ENCODE measurements at regions of chr9 and their contacts with region 1.

Region 1: DNA sequence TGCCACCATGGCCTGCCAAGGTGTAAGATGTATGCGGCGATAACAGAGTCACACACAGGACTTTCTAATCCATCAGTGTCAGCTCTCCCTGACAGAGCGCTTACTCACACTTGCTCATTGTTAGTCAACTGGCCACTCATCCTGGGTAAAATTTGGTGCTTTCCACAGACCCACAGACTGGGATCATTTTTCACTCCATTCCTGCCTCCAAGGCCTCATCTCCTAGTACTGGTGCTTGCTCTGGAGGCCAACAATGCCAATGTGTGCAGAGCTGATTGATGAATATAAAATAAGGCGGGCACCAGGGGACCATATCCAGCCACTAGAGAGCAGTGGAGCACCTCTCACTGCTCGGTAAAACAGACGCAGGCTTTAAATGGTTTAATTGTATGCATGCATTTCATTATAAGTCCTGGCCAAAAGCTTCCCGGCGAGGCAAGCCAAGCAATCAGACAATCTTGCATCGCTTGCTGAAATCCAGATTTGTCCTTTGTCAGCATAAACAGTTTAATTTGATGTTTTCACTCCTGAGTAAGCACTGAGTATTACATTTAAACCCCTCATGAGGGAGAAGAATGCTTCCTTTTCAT is 22.3 kb downstream of the PSMB7 start:
- DNase-seq: peak; percentile 87 to 99
- H3K4me3 ChIP-seq: peak overlapping the region; percentile 51; the same call in 1 of the 2 replicates
- H3K27ac ChIP-seq: peak overlapping the region; percentile 97
- H3K4me1 ChIP-seq: peaks cover 82% of the 10 kb centered on the region
- H3K27me3 ChIP-seq: no peaks in the 10 kb centered on the region
- CTCF ChIP-seq: peak; percentile 60; the same call in 1 of the 2 replicates

Region 2: DNA sequence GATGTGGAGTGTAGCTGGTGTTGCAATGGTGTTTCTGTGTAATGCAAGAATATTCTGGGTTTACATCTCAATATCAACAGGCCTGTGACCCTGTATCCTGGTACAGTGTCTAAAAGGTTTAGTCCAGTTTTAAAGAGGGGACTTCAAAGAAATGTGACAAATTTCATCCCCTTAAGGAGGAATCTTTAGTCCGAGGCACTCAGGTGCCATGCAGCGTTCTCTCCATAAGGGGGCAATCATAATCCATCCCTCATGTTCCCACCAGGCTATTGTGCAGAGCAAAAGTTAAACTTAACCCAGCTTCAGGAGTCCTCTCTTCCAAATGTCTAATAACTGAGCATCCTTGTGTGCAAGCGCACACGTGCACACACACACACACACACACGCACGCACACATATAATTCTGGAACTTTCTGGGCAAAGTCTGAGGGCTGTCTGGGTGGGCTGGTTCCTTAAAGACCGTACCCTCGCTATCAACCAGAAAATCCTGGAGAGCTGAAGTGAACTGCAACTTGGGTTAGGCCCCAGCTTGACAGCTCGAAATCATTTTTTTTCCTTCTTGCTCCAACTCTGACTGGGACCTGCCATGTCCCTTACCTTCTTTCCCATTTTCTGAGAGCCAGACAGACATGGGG is 991.0 kb before region 1 on chr9:
- CTCF ChIA-PET with region 1: no interaction called
- POLR2A ChIA-PET with region 1: no interaction called
- intact Hi-C with region 1: loop called (anchors 2 kb)
- DNase-seq: peak in 1 of 2 experiments; percentile 45
- H3K4me3 ChIP-seq: no peak overlapping the region
- H3K27ac ChIP-seq: no peak overlapping the region
- H3K4me1 ChIP-seq: no peaks in the 10 kb centered on the region
- H3K27me3 ChIP-seq: no peaks in the 10 kb centered on the region
- CTCF ChIP-seq: peak; percentile 81

Region 3: DNA sequence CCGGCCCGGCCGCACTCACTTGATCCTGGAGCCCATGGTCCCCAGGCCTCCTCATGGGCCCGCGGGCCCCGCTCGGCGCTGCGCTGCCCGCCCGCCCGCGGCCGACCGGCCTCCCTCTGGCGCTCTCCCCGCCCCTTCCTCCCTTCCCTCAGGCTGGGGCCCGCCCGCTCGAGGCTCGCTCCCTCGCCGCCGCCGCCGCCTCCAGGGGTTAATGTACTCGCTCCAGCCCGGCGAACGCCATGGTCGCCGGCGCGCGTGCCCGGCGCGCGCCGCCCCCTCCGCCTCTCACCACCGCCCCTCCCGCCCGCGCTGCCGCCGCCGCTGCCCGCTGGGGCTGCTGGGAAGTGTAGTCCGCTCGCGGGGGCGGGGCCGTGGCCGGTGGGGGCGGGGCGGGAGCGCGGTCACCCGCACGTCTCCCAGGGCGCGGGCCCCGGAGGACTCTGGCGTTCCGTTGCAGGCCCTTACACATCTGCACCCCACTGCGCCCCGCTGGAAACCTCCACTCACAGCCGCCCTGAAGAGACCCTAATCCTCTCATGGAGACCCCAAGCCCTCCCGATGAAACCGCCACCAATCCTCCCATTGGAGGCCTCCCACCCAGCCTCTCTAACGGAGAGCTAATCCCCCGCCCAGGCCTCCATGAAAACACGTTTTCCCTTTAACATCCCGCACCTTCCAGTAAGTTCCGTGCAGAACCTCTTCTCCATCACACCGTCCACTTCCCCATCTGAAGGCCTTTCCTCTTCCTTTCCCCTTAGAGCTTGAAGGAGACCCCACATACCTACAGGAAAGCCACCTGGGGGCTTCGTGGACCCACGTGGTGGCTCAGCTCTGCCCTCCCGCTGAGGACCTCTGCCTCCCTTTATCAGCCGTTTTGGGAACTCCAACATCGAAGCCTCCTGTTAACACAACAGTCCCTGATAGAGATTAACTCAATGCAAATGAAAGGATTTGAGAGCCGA is 462.8 kb before region 1 on chr9 and contains the start of gene DENND1A:
- CTCF ChIA-PET with region 1: no interaction called
- POLR2A ChIA-PET with region 1: no interaction called
- intact Hi-C with region 1: loop called (anchors 5 kb)
- DNase-seq: peak; percentile 58 to 92
- H3K4me3 ChIP-seq: peak within 1 kb of the TSS; percentile 85
- H3K27ac ChIP-seq: peak within 1 kb of the TSS; percentile 75
- H3K4me1 ChIP-seq: peaks cover 64% of the 10 kb centered on the region
- H3K27me3 ChIP-seq: no peaks in the 10 kb centered on the region
- CTCF ChIP-seq: no peak
- total RNA-seq, gene DENND1A: 26.8 and 37.7 TPM in 2 replicates

Region 4: GRCh38 chr9:124079176-124079925 is 313.6 kb before region 1 on chr9:
- CTCF ChIA-PET with region 1: no interaction called
- POLR2A ChIA-PET with region 1: no interaction called
- intact Hi-C with region 1: loop called (anchors 2 kb)
- DNase-seq: peak; percentile 58 to 84
- H3K4me3 ChIP-seq: no peak overlapping the region
- H3K27ac ChIP-seq: peak overlapping the region; percentile 70
- H3K4me1 ChIP-seq: peaks cover 25% of the 10 kb centered on the region
- H3K27me3 ChIP-seq: peaks cover 9% of the 10 kb centered on the region; the same call in 1 of the 2 replicates
- CTCF ChIP-seq: no peak

Region 5: DNA sequence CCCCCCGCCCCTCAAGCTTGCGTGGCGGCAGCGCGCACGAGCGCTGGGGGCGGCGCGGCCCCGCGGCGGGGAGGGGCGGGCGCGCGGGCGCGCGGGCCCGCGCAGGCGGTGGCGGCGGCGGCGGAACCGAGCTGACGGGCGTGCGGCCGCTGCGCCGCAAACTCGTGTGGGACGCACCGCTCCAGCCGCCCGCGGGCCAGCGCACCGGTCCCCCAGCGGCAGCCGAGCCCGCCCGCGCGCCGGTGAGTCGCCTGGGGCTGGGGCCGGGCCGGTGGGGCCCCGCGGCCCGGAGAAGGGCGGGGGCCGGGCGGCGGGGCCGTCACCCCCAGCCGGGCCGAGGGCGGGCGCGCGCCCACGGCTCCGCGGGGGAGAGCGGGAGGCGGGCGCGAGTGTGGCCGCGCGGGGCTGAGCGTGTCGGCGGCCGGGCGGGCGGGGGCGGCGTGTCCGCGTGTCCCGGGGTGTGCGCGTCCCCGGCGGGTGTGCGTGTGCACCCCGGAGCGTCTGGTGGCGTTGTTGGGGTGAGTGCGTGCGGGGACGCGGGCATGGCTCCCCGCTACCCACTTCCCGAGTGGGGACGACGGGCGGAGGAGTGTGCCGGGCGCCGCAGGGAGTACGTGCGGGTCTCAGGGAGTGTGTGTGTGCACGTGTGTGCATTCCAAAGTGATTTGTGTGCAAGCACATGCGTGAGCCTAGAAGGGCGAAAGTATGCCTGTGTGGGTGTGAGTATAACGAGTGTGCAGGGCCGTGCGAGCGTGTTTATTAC is 134.9 kb before region 1 on chr9 and contains the start of gene NEK6:
- CTCF ChIA-PET with region 1: no interaction called
- POLR2A ChIA-PET with region 1: no interaction called
- intact Hi-C with region 1: loop called (anchors 1 kb)
- DNase-seq: no peak
- H3K4me3 ChIP-seq: peak within 1 kb of the TSS; percentile 72
- H3K27ac ChIP-seq: peak within 1 kb of the TSS; percentile 72
- H3K4me1 ChIP-seq: peaks cover 43% of the 10 kb centered on the region
- H3K27me3 ChIP-seq: no peaks in the 10 kb centered on the region
- CTCF ChIP-seq: no peak
- total RNA-seq, gene NEK6: 48.1 and 57.9 TPM in 2 replicates

Region 6: DNA sequence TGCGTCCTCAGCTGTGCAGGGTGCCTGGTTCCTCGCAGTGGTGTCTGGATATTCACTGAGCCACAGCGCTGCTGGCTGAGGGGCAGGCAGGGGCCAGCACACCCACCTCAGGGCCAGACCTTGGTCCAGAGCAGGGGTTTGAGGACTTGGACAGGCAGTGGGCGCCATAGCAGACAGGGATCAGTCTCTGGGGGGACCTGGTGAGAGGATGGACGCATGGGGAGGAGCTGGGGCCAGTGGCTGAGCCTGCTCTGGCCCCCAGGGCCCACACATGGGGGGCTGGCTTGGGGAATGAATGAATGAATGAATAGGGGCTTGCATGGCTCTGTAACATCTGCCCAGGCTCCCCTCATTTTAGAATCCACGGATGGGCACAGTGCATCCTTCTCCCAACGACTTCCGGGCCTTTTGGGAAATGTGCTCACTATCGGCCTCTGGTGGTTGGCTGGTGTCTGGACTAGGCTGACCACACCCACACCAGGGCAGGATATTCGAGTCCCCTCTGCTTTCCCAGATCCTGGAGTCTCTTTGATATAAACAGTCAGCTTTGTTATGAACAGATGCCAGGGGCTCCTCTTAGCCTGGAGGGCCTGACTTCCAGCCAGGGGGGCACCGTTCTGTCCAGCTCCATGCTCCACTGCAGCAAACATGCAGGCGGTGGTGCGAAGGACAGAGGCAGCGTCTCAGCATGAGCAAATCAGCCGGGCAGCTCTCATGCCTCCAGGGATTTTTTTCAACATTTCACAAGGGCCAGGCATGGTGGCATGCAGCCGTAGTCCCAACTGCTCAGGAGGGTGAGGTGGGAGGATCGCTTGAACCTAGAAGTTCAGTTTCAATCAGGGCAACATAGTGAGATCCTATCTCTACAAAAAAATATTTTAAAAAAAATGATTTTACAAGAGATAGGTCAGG is 72.6 kb before region 1 on chr9:
- CTCF ChIA-PET with region 1: no interaction called
- POLR2A ChIA-PET with region 1: no interaction called
- intact Hi-C with region 1: no loop called
- DNase-seq: peak; percentile 41 to 77
- H3K4me3 ChIP-seq: no peak overlapping the region
- H3K27ac ChIP-seq: no peak overlapping the region
- H3K4me1 ChIP-seq: no peaks in the 10 kb centered on the region
- H3K27me3 ChIP-seq: no peaks in the 10 kb centered on the region
- CTCF ChIP-seq: peak; percentile 89

Region 7: DNA sequence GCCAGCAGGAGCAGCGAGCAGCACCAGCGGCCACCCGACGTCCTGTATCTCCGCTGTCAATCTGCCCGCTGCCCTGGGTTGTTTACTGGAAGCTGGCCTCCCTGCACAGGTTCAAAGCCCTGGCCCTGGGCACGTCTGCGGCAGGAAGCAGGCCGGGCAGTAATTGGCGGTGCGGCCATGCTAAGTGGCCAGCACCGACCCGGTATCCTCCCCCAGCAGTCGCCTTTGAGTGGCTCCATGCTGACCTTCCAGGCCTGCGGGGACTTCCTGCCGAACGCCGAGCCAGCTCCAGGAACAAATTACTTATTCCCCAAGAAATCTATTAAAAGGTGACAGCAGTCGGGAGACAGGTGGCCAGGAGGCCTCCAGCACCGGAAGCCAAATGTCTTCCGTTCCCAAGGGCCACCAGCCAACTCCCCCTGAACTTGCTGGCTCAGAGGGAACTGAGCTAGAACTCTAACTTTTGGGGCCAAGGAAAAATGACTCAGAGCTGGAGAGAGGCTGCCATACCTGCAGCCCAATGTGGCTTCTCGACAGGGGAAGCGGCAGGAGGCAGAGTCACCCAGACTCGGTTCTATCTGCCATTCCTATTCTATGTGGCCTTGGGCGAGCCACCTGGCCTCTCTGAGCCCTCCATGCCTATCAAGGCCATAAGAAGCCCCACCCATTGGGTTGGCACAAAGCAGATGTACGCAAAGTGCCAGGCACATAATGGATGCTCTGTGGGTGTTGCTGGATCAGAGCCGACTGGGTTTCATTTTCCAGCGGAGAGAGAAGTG is 36.0 kb after region 1 on chr9:
- CTCF ChIA-PET with region 1: no interaction called
- POLR2A ChIA-PET with region 1: no interaction called
- intact Hi-C with region 1: no loop called
- DNase-seq: no peak
- H3K4me3 ChIP-seq: no peak overlapping the region
- H3K27ac ChIP-seq: no peak overlapping the region
- H3K4me1 ChIP-seq: no peaks in the 10 kb centered on the region
- H3K27me3 ChIP-seq: no peaks in the 10 kb centered on the region
- CTCF ChIP-seq: no peak

Region 8: GRCh38 chr9:124532897-124533296 is 139.9 kb after region 1 on chr9:
- CTCF ChIA-PET with region 1: interaction called, 15 read pairs
- POLR2A ChIA-PET with region 1: no interaction called
- intact Hi-C with region 1: no loop called
- DNase-seq: no peak
- H3K4me3 ChIP-seq: no peak overlapping the region
- H3K27ac ChIP-seq: no peak overlapping the region
- H3K4me1 ChIP-seq: peaks cover 14% of the 10 kb centered on the region
- H3K27me3 ChIP-seq: no peaks in the 10 kb centered on the region
- CTCF ChIP-seq: no peak

Region 9: DNA sequence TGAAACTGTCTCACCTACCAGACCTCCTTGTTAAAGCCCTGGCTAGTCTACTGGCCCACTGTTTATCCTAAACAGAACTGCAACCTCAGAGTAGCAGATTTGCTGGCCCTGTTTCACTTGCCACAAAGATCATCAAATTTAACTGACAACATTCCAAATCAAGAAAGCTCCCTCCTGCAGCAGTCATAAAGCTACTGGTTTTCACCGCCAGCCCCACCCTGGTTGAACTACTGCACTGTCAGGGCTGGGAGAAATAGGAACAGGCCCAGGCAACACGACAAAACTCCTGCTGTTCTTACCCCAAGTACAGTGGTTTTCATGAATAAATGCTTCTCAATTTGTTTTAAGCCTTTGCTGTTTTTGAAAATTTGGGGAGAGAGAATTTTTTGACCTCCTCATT is 315.1 kb after region 1 on chr9:
- CTCF ChIA-PET with region 1: no interaction called
- POLR2A ChIA-PET with region 1: no interaction called
- intact Hi-C with region 1: no loop called
- DNase-seq: no peak
- H3K4me3 ChIP-seq: no peak overlapping the region
- H3K27ac ChIP-seq: peak overlapping the region; percentile 57
- H3K4me1 ChIP-seq: peaks cover 36% of the 10 kb centered on the region
- H3K27me3 ChIP-seq: no peaks in the 10 kb centered on the region
- CTCF ChIP-seq: no peak